SK-N-SH (cell line): ENCODE measurements at regions of chr1 and their contacts with region 1.

Region 1: DNA sequence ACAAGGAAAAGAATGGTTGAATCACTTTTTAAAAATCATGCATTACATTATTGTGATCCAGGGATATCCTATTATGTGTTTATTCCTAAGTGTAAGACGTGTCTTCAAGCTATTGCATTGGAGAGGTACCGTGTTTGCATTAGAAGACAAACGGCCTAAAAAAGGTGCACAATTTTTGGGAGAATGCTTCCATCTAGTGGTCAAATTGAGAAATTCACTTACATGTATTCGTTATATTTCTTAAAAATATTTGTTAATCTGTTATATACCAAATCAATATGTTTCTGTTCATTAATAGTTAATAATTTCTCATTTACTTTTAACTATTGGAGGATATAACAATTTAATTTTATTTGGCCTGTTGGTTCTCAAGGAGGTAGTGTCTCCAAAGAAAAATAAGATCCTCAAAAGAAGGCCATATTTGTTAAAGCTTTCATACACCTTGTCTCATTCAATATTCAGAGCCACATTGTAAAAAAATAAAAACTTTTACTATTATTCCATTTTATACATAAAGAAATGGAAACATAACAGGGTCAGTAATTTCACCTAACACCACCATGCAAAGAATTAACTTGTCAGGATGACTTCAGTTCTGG is 40.5 kb upstream of the KCTD3 start:
- DNase-seq: peak; percentile 15
- H3K4me3 ChIP-seq: no peak overlapping the region
- H3K27ac ChIP-seq: no peak overlapping the region
- H3K4me1 ChIP-seq: no peaks in the 10 kb centered on the region; a peak in 1 of 4 replicates
- H3K27me3 ChIP-seq: no peaks in the 10 kb centered on the region
- CTCF ChIP-seq: peak; percentile 75
- EP300 ChIP-seq: no peak
- RAD21 ChIP-seq: peak; percentile 88

Region 2: GRCh38 chr1:215539803-215540592 is 13.3 kb after region 1 on chr1:
- CTCF ChIA-PET with region 1: interaction called, 16 read pairs
- POLR2A ChIA-PET with region 1: no interaction called
- DNase-seq: no peak
- H3K4me3 ChIP-seq: no peak overlapping the region
- H3K27ac ChIP-seq: peak overlapping the region in 1 of 2 experiments; percentile 55; a peak in 1 of 4 replicates
- H3K4me1 ChIP-seq: peaks cover 0 to 10% of the 10 kb centered on the region in 2 experiments; a peak in 2 of 4 replicates
- H3K27me3 ChIP-seq: no peaks in the 10 kb centered on the region
- CTCF ChIP-seq: no peak
- EP300 ChIP-seq: no peak
- RAD21 ChIP-seq: no peak